HEK293T (cell line): ENCODE measurements at regions of chr7 and their contacts with region 1.

Region 1: DNA sequence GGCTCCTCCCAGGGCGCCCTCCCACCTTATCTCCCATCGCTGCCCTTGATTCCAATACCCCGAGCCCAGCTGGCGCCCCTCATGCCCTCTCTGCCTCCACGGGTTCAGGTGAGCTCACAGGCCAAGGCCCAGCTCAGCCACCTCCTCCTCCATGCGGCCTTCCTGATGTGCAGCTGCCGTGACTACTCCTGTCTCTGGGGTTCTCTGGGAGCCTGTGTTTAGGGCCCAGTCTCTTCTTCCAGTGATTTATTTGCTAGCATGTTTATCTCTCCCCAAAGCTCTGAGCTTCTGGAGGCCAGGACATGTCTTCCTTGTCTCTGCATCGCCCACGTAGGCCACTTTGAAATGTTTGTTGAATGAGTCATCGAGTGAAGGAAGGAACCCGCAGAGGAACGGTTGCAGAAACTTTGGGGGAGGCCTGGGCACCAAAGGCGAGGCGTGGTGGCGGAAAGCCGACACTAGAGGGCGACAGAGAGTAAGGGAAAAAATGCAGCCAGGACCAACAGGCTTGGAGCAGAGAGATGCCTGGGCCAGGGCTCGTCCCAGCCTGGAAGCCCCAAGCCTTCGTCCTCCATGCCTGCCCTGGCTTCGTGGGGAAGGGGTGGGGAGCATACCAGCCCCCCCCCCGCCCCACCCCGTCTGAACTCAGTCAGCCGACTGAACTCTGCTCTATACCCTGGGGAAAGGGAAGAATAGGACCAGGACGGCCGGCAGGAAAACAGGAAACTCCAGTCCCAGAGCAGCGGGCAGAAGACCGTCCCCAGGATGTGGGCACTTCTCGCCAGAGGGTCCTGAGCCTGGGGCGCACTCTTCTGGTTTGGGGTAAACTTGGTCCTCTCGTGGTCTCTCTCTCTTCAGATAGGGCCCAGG is 10.9 kb upstream of the HSPB1 start:
- DNase-seq: peak; percentile 89

Region 2: GRCh38 chr7:76307446-76308003 is 15.9 kb after region 1 on chr7:
- CTCF ChIA-PET with region 1: interaction called, 17 read pairs
- POLR2A ChIA-PET with region 1: interaction called, 8 read pairs
- DNase-seq: no peak